Heart left ventricle (tissue), 16 donors: ENCODE measurements at regions of chr13 and their contacts with region 1.

Region 1: GRCh38 chr13:80684217-80684991 is 343.5 kb upstream of the SPRY2 start:
- DNase-seq: no peak
- ATAC-seq: no peak
- H3K4me3 ChIP-seq: no peak overlapping the region
- H3K27ac ChIP-seq: peak overlapping the region in 5 of 12 donors; percentile 19 to 59 (median 23)
- H3K4me1 ChIP-seq: peaks cover 0 to 4% (median 0%) of the 10 kb centered on the region in 12 donors
- H3K27me3 ChIP-seq: no peaks in the 10 kb centered on the region
- CTCF ChIP-seq: no peak
- POLR2A ChIP-seq: no peak

Region 2: GRCh38 chr13:80529734-80530133 is 154.7 kb before region 1 on chr13:
- intact Hi-C with region 1: loop called in 1 of 10 experiments (anchors 10 kb)
- DNase-seq: no peak
- ATAC-seq: no peak
- H3K4me3 ChIP-seq: no peak overlapping the region
- H3K27ac ChIP-seq: no peak overlapping the region
- H3K4me1 ChIP-seq: peaks cover 0 to 3% (median 0%) of the 10 kb centered on the region in 12 donors
- H3K27me3 ChIP-seq: no peaks in the 10 kb centered on the region
- CTCF ChIP-seq: no peak
- POLR2A ChIP-seq: no peak

Region 3: DNA sequence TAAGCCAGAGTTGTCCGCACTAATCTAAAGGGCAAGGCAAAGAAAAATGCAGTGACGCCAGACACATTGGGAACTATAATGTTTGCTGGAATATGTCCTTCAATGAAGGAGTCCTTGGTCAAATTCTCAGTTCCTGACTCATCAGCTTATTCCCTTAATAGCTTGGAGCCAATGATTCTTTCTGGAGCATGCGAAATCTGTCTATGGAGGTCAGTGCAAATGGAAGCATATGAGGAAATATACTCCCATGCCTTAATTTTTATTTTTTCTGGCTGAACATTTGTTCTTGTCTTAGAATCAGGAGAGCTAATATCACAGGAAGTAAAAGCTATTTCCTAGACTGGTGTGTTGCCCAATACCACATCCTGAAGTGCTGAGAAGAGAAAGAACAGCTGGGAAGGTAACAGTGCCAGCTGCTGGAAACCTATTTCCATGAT is 53.7 kb before region 1 on chr13:
- intact Hi-C with region 1: no loop called
- DNase-seq: peak in 2 of 5 donors; percentile 25 to 28
- ATAC-seq: peak; percentile 84 to 94 (median 92)
- H3K4me3 ChIP-seq: no peak overlapping the region
- H3K27ac ChIP-seq: peak overlapping the region in 9 of 12 donors; percentile 44 to 77 (median 68)
- H3K4me1 ChIP-seq: peaks cover 0 to 16% (median 7%) of the 10 kb centered on the region in 12 donors
- H3K27me3 ChIP-seq: no peaks in the 10 kb centered on the region
- CTCF ChIP-seq: no peak
- POLR2A ChIP-seq: no peak